A549 (cell line): ENCODE measurements at regions of chr14 and their contacts with region 1.

Region 1: DNA sequence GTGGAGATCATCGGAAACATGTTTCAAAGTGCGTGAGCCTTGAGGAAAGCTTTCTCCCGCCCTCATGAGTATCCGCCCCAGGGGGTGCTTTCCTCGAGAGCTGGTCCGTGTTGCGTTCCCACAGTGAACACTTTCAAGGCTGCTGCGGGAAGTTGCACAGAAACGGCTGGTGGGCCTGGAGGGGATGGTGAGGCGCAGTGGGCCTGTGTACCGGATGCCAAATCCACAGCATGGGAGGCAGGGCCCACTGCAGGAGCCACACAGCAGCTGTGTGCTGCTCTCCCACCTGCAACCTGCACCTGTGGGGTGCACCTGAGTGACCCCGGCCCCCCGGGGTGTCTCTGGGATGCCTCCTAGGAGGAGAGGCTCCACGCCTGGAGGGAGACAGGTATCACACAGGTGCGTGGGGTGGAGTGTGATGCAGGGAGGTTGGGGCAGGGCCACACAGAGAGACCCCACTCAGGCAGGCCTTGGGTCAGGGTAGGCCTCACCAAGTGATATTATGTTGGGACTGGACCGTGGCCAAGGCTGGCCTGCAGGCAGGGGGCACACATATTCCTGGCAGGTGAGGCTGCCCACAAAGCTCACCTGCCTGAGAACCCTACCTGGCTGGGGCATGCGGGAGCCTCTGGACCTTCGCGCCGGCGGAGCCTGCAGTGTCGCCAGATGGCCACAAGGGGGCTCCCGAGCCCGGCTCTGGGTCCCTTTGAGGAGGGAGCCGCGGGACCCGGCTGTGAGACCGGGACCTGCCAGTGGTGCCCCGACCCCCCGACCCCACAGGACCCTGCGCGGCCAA is 11.2 kb downstream of the TMEM121 start:
- DNase-seq: peak in 1 of 2 experiments; percentile 77
- ATAC-seq: peak; percentile 75 to 92
- H3K4me3 ChIP-seq: no peak overlapping the region
- H3K27ac ChIP-seq: 0 out of 6 replicates have a peak overlapping the region, but pooled peaks of 1 of the 2 experiments have one; percentile 36
- H3K4me1 ChIP-seq: no peaks in the 10 kb centered on the region
- CTCF ChIP-seq: peak; percentile 81
- EP300 ChIP-seq: no peak
- POLR2A ChIP-seq: no peak
- RAD21 ChIP-seq: peak; percentile 55 to 63

Region 2: DNA sequence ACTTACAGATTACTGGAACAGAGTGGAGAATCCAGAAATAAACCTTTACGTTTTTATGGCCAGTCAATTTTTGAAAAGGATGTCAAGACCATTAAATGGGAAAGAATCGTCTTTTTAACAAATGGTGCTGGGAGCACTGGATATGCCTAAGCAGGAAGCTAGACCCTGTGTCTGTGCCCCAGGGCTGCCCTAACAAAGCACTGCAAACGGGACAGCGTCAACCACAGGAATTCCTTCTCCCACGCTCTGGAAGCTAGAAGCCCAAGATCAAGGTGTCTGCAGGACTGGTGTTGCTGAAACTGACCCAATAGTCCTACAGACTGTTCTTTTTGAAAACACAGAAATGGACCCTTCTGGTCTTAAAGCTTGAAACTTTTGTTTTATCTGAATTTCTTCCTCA is 20.5 kb before region 1 on chr14:
- CTCF ChIA-PET with region 1: interaction called, 14 read pairs
- POLR2A ChIA-PET with region 1: no interaction called
- DNase-seq: no peak
- ATAC-seq: 0 out of 6 replicates have a peak, but pooled peaks of 1 of the 2 experiments have one; percentile 35
- H3K4me3 ChIP-seq: no peak overlapping the region
- H3K27ac ChIP-seq: no peak overlapping the region
- H3K4me1 ChIP-seq: peaks cover under 1% of the 10 kb centered on the region; the same call in 2 of the 3 replicates
- CTCF ChIP-seq: no peak
- EP300 ChIP-seq: no peak
- POLR2A ChIP-seq: no peak
- RAD21 ChIP-seq: no peak

Region 3: GRCh38 chr14:105549481-105549880 is 11.9 kb after region 1 on chr14:
- CTCF ChIA-PET with region 1: interaction called, 18 read pairs
- POLR2A ChIA-PET with region 1: no interaction called
- DNase-seq: no peak
- ATAC-seq: no peak
- H3K4me3 ChIP-seq: no peak overlapping the region
- H3K27ac ChIP-seq: no peak overlapping the region
- H3K4me1 ChIP-seq: no peaks in the 10 kb centered on the region
- CTCF ChIP-seq: no peak
- EP300 ChIP-seq: no peak
- POLR2A ChIP-seq: no peak
- RAD21 ChIP-seq: no peak